ENCODE measurements at regions of chr17 and their contacts with region 1.

Region 1: DNA sequence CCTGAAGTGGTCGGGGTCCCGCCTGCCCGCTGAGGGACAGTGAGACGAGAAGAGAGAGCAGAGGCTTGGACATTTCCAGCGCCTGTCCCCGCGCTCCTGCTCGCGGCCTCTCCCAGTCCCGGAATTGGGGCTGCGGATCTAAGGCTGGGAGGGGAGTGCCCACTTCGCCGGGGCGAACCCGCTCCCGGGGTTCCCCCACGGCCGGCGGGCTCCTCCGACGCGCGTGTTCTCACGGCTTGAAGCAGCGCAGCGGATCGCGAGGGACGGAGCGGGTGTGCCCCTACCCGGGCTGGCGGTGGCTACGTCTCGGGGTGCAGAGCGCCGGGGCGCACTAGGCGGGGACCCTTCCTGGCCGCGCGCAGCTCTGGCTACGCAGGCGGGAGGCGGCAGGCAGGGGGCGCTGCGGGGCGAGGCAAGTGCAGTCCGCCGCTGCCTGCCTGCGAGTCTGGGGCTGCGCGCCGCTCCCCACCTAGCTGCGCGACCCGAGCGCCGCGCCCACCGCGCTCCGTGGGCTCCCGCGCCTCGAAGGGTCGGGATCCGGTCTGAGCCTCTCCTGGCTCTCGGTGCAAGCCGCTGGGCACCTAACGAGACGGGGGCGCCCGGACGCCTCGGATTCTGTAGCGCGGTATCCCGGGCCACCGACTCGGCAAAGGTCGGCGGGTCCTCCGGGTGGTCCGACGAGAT is 1.2 kb downstream of the NGFR start:
- DNase-seq: peak; percentile 78
- H3K4me3 ChIP-seq: peak overlapping the region in 3 of 4 donors; percentile 25 to 55 (median 36)
- H3K27ac ChIP-seq: no peak overlapping the region
- H3K4me1 ChIP-seq: peaks cover 18 to 33% (median 32%) of the 10 kb centered on the region in 4 donors
- H3K27me3 ChIP-seq: peaks cover 75% of the 10 kb centered on the region
- CTCF ChIP-seq: peak; percentile 56 to 91 (median 83)
- EP300 ChIP-seq: no peak
- POLR2A ChIP-seq: no peak

Region 2: GRCh38 chr17:49146620-49147306 is 349.6 kb before region 1 on chr17:
- in situ Hi-C with region 1: no loop called
- intact Hi-C with region 1: loop called (anchors 2 kb)
- DNase-seq: no peak
- H3K4me3 ChIP-seq: no peak overlapping the region
- H3K27ac ChIP-seq: no peak overlapping the region
- H3K4me1 ChIP-seq: peaks cover 0 to 7% (median 4%) of the 10 kb centered on the region in 4 donors
- H3K27me3 ChIP-seq: peaks cover 3% of the 10 kb centered on the region
- CTCF ChIP-seq: no peak
- EP300 ChIP-seq: no peak
- POLR2A ChIP-seq: no peak

Region 3: GRCh38 chr17:49434821-49435670 is 61.3 kb before region 1 on chr17:
- in situ Hi-C with region 1: loop called in 1 of 4 experiments (anchors 10 kb)
- intact Hi-C with region 1: no loop called
- DNase-seq: peak; percentile 31
- H3K4me3 ChIP-seq: no peak overlapping the region
- H3K27ac ChIP-seq: no peak overlapping the region
- H3K4me1 ChIP-seq: no peaks in the 10 kb centered on the region
- H3K27me3 ChIP-seq: peaks cover 28% of the 10 kb centered on the region
- CTCF ChIP-seq: peak; percentile 46 to 78 (median 68)
- EP300 ChIP-seq: no peak
- POLR2A ChIP-seq: no peak

Region 4: GRCh38 chr17:49548506-49549310 is 52.4 kb after region 1 on chr17:
- in situ Hi-C with region 1: loop called in 1 of 4 experiments (anchors 10 kb)
- intact Hi-C with region 1: loop called (anchors 2 kb)
- DNase-seq: no peak
- H3K4me3 ChIP-seq: no peak overlapping the region
- H3K27ac ChIP-seq: no peak overlapping the region
- H3K4me1 ChIP-seq: no peaks in the 10 kb centered on the region
- H3K27me3 ChIP-seq: no peaks in the 10 kb centered on the region
- CTCF ChIP-seq: peak; percentile 29 to 45 (median 39)
- EP300 ChIP-seq: no peak
- POLR2A ChIP-seq: no peak

Region 5: DNA sequence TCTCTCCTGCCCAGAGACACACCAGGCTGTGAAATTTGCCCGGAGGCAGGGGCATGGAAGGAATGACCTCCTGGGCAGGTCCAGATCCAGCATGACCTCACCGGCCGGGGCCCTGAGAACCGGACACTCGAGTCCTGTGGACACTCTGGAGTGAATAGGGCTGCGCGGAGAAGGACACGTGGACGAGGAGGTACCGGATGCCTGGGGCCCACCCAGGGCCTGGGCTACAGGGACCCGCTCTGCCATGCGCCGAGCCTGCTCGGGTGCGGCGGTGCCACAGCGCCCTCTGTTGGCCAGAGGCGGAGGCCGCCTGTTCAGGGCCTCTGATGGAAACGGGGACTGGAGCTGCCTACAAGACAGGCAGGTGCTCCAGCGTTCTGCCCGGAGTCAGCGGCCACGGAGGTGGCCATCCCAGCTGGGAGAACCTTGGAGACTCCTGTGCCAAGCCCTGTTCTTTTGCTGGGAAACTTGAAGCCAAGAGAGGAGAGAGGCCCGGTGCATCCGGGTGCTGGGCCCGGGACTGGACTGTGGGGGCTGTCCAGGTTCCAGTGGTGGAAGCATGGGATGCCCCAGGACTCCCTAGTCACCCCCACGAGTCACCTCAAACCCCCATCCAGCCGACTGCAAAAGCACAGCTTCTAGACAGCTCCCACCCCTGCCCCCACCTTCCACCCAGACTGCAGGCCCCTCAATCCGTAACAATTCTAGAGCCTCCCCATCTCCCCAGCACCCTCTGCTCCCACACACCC is 60.1 kb after region 1 on chr17:
- in situ Hi-C with region 1: loop called in 1 of 4 experiments (anchors 10 kb)
- intact Hi-C with region 1: loop called (anchors 2 kb)
- DNase-seq: peak; percentile 79
- H3K4me3 ChIP-seq: no peak overlapping the region
- H3K27ac ChIP-seq: no peak overlapping the region
- H3K4me1 ChIP-seq: peaks cover 3 to 8% (median 6%) of the 10 kb centered on the region in 4 donors
- H3K27me3 ChIP-seq: no peaks in the 10 kb centered on the region
- CTCF ChIP-seq: peak; percentile 91 to 99 (median 98)
- EP300 ChIP-seq: no peak
- POLR2A ChIP-seq: no peak

Measured in transverse colon (tissue), 4 donors.